Endothelial cell of umbilical vein (primary cell): ENCODE measurements at regions of chr15 and their contacts with region 1.

Region 1: DNA sequence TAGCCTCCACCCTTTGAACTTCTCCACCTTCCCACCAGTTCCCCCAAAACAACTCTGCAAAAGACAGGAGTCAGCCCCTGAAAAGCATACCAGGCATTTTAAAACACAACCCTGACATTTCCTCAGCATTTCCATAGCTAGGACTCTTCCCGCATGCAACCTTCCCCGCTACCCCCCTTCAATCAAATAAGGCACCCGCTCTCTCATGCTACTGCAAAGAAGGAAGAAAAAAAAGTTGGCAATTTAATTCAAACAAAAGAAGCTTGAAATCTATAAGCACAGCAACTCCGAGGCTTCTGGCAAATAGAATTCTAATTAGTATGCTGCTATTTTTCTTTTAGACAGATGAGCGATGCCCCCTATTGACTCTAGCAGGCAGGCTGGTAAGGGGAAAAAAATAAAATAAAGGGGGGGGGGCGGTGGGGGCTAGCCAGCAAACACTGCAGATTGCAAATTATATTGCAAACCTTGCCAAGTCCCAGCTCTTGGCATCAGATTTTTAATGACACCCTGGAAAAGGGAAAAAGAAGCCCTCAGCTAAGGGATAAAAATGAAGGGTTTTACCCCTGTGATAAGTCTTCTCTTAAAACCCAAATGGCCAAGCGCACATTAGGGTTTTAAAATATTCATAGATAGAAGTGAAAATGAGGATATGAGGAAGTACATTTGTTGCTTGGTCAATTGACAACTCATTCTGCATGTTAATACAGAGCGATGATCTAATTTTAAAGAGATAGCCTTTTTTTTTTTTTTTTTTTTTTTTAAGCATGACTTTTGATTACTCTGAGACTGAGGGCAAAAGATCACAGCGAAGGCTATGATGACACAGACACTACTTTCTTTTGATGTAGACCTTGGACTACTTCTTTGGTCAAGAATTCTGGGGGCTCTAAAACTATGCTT is 255.2 kb downstream of the NR2F2 start:
- DNase-seq: peak; percentile 39
- H3K4me3 ChIP-seq: no peak overlapping the region
- H3K27ac ChIP-seq: no peak overlapping the region
- H3K4me1 ChIP-seq: no peaks in the 10 kb centered on the region
- H3K27me3 ChIP-seq: peaks cover 0 to 2% of the 10 kb centered on the region in 2 experiments
- CTCF ChIP-seq: peak in 1 of 2 donors; percentile 33
- POLR2A ChIP-seq: no peak

Region 2: DNA sequence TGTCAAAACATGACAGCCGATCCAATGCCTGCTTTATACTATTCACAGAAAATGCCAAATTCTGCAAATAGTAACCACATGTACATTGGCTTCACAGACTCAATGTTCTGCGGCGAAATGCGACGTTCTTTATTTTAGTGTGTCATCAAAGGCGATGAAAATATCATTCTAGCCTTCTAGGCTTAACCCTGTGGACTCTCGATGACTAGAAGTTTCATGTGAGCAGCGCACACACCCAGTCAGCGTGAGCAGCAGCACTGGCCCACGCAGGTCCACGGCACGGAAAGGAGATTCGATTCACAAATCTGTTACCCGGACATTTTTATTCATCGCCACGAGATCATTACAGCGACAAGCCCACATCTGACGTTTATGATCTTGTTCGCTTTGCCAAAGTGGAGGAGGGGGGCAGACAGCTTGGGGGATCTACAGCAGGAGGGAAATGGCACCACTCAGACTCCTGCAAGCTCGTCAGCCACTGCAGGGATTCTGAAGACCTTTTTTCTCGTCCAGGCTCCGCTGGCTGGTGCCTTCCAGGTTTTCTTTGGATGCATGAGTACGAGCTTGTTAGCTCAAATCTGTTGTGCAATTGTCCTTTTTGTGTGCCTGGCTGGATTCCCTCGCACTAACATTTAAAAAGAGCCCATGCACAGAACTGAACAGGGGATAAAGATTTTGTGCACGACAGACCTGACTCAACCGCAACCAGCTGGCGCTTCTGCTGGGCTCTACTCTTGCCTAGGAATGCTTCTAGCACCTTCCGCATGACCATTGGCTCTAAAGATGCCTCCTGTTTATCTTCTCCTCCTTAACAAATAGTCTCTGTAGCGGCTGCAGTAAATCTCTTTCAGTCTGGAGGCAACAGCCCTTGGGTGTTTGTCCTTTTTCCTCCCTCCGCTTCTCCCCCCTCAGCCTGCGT is 1415.9 kb before region 1 on chr15:
- CTCF ChIA-PET with region 1: no interaction called
- POLR2A ChIA-PET with region 1: no interaction called
- dilution Hi-C with region 1: no loop called
- intact Hi-C with region 1: loop called (anchors 10 kb)
- DNase-seq: no peak
- H3K4me3 ChIP-seq: no peak overlapping the region
- H3K27ac ChIP-seq: no peak overlapping the region
- H3K4me1 ChIP-seq: peaks cover 7% of the 10 kb centered on the region
- H3K27me3 ChIP-seq: no peaks in the 10 kb centered on the region
- CTCF ChIP-seq: no peak
- POLR2A ChIP-seq: no peak

Region 3: GRCh38 chr15:97759363-97759762 is 1173.6 kb after region 1 on chr15:
- CTCF ChIA-PET with region 1: no interaction called
- POLR2A ChIA-PET with region 1: no interaction called
- dilution Hi-C with region 1: no loop called
- intact Hi-C with region 1: loop called (anchors 10 kb)
- DNase-seq: peak; percentile 62
- H3K4me3 ChIP-seq: no peak overlapping the region
- H3K27ac ChIP-seq: no peak overlapping the region
- H3K4me1 ChIP-seq: peaks cover 4% of the 10 kb centered on the region
- H3K27me3 ChIP-seq: peaks cover 4 to 18% of the 10 kb centered on the region in 2 experiments
- CTCF ChIP-seq: no peak
- POLR2A ChIP-seq: no peak